ENCODE measurements at regions of chr12 and their contacts with region 1.

Region 1: DNA sequence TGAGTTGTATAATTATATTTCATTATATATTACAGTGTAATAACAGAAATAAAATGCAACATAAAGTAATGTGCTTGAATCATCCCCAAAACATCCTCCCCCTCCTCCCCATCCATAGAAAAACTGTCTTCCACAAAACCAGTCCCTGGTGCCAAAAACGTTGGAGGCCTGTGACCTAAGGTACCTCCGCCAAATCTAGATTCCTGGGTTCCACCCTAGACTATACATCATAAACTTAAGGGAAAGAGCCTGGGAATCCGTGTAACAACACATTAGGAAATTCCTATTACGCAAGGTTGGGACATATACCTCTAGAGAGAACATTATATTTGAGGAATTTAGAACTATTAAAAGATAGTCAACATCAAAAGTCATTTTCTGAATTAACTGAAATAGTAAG is 38.0 kb downstream of the SPPL3 start:
- DNase-seq: no peak
- ATAC-seq: no peak
- H3K4me3 ChIP-seq: no peak overlapping the region
- H3K27ac ChIP-seq: no peak overlapping the region
- H3K4me1 ChIP-seq: peaks cover 5% of the 10 kb centered on the region; the same call in 1 of the 2 replicates
- H3K27me3 ChIP-seq: no peaks in the 10 kb centered on the region
- CTCF ChIP-seq: no peak
- EP300 ChIP-seq: no peak
- POLR2A ChIP-seq: no peak
- RAD21 ChIP-seq: no peak

Region 2: DNA sequence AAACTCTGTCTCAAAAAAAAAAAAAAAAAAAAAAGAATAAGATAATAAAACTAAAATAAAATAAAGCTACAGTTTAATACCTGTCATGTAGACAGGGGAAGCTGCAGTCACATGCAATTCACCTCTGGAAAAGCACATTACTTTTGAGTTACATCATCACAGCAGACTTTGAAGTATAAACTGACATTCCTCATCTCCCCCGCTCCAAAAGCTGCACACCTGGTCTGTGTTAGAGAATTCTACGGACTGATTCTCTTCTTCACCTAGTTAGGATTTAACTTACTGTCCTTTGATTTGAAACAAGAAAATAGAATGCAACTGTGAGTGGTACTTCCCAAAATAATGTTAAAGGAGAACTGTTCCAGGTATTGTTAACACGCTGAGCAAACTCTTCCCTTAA is 13.0 kb after region 1 on chr12:
- CTCF ChIA-PET with region 1: interaction called, 4 read pairs
- POLR2A ChIA-PET with region 1: interaction called, 8 read pairs
- RAD21 ChIA-PET with region 1: interaction called, 5 read pairs
- SMC1A ChIA-PET with region 1: interaction called, 12 read pairs
- in situ Hi-C with region 1: no loop called
- intact Hi-C with region 1: no loop called
- DNase-seq: no peak
- ATAC-seq: no peak
- H3K4me3 ChIP-seq: no peak overlapping the region
- H3K27ac ChIP-seq: no peak overlapping the region
- H3K4me1 ChIP-seq: no peaks in the 10 kb centered on the region
- H3K27me3 ChIP-seq: no peaks in the 10 kb centered on the region
- CTCF ChIP-seq: no peak
- EP300 ChIP-seq: no peak
- POLR2A ChIP-seq: no peak
- RAD21 ChIP-seq: no peak

Measured in GM12878 (cell line).